Posterior cingulate gyrus (tissue), 11 donors: ENCODE measurements at regions of chr12 and their contacts with region 1.

Region 1: GRCh38 chr12:14845350-14845750 is 2.0 kb upstream of the ART4 start:
- DNase-seq: peak in 3 of 10 donors; percentile 24 to 40 (median 31)

Region 2: DNA sequence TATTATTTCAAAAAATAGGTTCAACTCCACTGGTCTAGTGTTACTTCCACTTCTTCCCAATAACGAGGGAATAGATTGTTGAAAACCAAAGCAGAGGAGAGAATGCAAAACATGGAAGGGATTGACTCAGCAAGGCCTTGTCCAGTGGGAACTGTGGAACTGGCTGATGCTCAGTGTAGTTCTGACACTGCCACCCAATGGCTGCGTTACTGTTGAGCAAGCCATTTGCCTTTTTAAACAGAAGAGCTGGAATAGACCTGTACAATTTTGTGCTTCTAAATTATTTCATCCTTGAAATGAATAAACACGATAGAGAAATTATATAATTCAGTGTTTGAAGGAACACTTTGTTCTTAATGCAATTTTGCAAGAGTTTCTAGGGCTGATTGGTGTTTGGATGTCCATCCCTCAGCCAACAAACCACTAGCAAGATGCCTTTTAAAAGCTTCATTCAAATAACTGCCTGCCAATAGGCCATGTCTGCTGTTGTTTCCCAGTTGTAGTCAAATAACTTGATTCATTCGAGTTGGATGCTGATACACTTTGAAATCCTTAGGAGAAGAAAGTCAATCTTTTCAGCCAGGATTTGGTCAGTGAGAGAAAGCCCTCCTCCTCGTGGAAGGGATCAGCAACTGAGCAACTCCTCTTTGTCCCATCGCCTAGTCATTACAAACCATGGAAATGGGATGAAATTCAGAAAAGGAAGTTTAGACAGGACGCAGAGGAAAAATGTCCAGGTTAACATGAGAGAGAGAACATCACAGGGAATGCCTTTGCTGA is 47.6 kb after region 1 on chr12:
- intact Hi-C with region 1: loop called (anchors 1 kb)
- DNase-seq: peak in 2 of 10 donors; percentile 39 to 43

Region 3: DNA sequence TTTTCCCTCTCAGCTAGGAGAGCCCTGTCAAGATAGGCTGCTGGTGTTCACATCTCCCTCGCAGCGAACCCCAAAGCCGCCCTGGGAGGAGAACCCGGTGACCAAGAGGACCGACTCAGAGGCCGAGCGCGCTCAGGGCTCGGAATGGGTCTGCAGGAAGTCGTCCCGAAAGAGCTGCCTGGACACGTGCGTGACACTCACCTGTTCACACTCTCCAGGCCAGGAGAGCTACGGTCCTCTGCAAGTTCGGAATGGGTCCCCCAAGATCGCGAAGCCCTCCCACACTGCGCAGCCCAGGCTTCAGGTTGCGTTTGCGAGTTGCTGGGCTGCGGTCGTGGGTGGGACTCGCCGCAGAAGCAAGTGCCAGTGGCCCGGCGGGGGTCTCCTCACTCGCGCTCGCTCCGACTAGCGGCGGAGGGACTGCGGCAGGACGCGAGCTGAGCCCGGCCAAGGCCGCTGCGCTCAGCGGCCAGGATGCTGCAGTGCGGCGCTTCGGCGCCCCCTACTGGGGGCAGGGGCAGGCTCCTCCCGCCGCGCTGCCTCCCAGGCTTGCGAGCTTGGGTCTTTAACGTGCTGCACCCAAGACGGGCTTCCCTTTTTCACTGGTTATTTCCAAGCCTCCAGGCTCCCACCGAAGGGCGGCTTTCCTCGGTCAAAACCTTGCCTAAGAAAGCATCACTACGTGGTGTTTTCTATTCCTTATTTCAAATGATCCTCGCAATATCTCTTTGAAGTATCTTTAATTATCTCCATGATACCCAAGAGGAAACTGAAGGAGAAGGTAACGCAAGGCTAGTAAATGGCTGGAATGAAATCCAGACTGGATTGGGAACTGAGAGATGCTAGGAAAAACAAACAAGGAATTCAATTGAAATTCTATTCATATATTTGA is 375.9 kb after region 1 on chr12 and contains the start of gene RERG:
- intact Hi-C with region 1: loop called (anchors 2 kb)
- DNase-seq: peak; percentile 66 to 97 (median 80)